ENCODE measurements at regions of chr20 and their contacts with region 1.

Region 1: GRCh38 chr20:2688041-2688591 is 4.5 kb upstream of the EBF4 start:
- DNase-seq: peak; percentile 79
- ATAC-seq: peak; percentile 76
- H3K4me3 Mint-ChIP-seq: peak overlapping the region; percentile 59
- H3K27ac Mint-ChIP-seq: no peak overlapping the region
- H3K4me1 Mint-ChIP-seq: peaks cover 21% of the 10 kb centered on the region
- H3K27me3 Mint-ChIP-seq: peaks cover 87% of the 10 kb centered on the region
- CTCF ChIP-seq: peak; percentile 86

Region 2: GRCh38 chr20:2005831-2006426 is 682.2 kb before region 1 on chr20:
- CTCF ChIA-PET with region 1: no interaction called
- POLR2A ChIA-PET with region 1: no interaction called
- DNase-seq: peak; percentile 90
- ATAC-seq: peak; percentile 50; the same call in 1 of the 2 replicates
- H3K4me3 Mint-ChIP-seq: no peak overlapping the region
- H3K27ac Mint-ChIP-seq: no peak overlapping the region
- H3K4me1 Mint-ChIP-seq: peaks cover 10% of the 10 kb centered on the region; the same call in 1 of the 2 replicates
- H3K27me3 Mint-ChIP-seq: peaks cover 20% of the 10 kb centered on the region
- CTCF ChIP-seq: no peak

Region 3: GRCh38 chr20:2599288-2600006 is 88.7 kb before region 1 on chr20:
- CTCF ChIA-PET with region 1: no interaction called
- POLR2A ChIA-PET with region 1: no interaction called
- DNase-seq: peak; percentile 17
- ATAC-seq: peak; percentile 81
- H3K4me3 Mint-ChIP-seq: no peak overlapping the region
- H3K27ac Mint-ChIP-seq: no peak overlapping the region; the same call in 1 of the 2 replicates
- H3K4me1 Mint-ChIP-seq: peaks cover 10% of the 10 kb centered on the region
- H3K27me3 Mint-ChIP-seq: no peaks in the 10 kb centered on the region; the same call in 1 of the 2 replicates
- CTCF ChIP-seq: no peak

Region 4: GRCh38 chr20:2626853-2627541 is 61.1 kb before region 1 on chr20:
- CTCF ChIA-PET with region 1: no interaction called
- POLR2A ChIA-PET with region 1: no interaction called
- DNase-seq: no peak
- ATAC-seq: no peak
- H3K4me3 Mint-ChIP-seq: no peak overlapping the region
- H3K27ac Mint-ChIP-seq: no peak overlapping the region
- H3K4me1 Mint-ChIP-seq: no peaks in the 10 kb centered on the region
- H3K27me3 Mint-ChIP-seq: peaks cover 34% of the 10 kb centered on the region
- CTCF ChIP-seq: no peak

Region 5: GRCh38 chr20:2671977-2672376 is 16.1 kb before region 1 on chr20:
- CTCF ChIA-PET with region 1: interaction called, 12 read pairs
- POLR2A ChIA-PET with region 1: no interaction called
- DNase-seq: peak; percentile 66
- ATAC-seq: peak; percentile 94
- H3K4me3 Mint-ChIP-seq: no peak overlapping the region
- H3K27ac Mint-ChIP-seq: no peak overlapping the region
- H3K4me1 Mint-ChIP-seq: 0 out of 2 replicates have a peak, but pooled peaks cover 3% of the 10 kb centered on the region
- H3K27me3 Mint-ChIP-seq: peaks cover 32% of the 10 kb centered on the region
- CTCF ChIP-seq: peak; percentile 25; the same call in 1 of the 2 replicates

Region 6: DNA sequence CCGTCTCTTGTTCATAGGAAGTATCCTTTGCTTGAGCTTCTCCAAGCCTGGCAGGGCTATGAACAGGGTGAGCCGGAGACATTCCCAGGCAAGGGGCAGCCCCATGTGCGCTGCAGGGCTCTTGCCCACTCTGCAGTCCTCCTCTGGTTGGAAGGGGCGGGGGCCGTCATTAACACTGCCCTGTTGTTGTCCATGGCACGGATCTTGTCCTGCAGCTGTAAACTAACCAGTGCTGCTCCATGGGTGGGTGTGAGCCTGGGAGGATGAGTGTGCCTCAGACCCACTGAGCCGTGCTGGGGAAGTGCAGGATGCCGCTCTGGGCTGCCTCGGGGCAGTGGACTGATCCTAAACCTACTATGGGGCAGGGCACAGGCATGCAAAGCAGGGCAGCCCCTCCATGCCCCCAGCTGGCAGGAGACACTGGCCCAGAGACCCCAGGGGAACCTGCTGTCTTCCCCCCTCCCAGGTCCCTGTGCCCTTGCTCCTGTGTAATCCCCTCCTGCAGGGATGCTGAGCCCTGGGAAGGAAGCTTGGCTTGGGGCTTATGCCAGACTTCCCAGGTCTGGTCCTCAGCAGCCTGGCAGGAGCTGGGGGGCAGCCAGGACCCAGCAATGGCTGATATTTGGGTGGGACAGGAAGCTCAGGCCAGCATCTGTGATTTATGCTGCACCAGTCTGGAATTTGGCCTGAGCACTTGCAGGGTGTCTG is 13.0 kb after region 1 on chr20:
- CTCF ChIA-PET with region 1: interaction called, 35 read pairs
- POLR2A ChIA-PET with region 1: no interaction called
- DNase-seq: no peak
- ATAC-seq: no peak
- H3K4me3 Mint-ChIP-seq: no peak overlapping the region
- H3K27ac Mint-ChIP-seq: no peak overlapping the region
- H3K4me1 Mint-ChIP-seq: peaks cover 29% of the 10 kb centered on the region
- H3K27me3 Mint-ChIP-seq: peaks cover 95% of the 10 kb centered on the region
- CTCF ChIP-seq: no peak

Region 7: DNA sequence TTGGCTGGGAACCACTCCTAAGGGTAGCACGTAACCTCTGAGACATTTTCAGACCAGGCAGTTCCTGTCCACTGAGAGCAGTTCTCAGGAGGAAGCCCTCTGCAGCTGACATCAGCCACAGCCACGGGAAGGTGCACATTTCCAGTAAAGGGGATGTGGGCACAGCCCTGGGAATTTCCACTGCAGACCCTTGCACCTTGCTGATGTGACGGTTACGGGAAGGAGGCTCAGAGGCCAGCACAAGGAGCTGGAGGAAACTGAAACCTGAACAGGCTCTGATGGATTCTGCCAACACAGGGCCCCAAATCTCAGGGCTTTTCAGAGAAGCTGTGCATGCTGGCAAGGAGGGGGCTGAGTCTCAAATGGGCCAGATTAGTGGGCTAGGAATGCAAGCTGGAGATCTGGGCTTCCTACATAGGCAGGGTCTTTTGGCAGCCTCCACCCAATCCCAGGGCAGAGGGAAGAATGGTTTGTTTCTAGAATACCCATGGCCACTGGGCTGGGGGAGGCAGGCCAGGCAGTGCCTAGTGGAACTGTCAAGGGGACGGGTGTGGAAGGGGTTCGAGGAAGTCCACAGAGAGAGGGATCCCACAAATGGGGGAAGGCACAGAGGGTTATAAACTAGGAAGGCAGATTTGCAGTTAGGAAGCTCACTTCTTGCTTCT is 18.7 kb after region 1 on chr20:
- CTCF ChIA-PET with region 1: interaction called, 35 read pairs
- POLR2A ChIA-PET with region 1: no interaction called
- DNase-seq: no peak
- ATAC-seq: no peak
- H3K4me3 Mint-ChIP-seq: no peak overlapping the region
- H3K27ac Mint-ChIP-seq: no peak overlapping the region
- H3K4me1 Mint-ChIP-seq: peaks cover 30% of the 10 kb centered on the region
- H3K27me3 Mint-ChIP-seq: peaks cover 46% of the 10 kb centered on the region
- CTCF ChIP-seq: no peak

Region 8: DNA sequence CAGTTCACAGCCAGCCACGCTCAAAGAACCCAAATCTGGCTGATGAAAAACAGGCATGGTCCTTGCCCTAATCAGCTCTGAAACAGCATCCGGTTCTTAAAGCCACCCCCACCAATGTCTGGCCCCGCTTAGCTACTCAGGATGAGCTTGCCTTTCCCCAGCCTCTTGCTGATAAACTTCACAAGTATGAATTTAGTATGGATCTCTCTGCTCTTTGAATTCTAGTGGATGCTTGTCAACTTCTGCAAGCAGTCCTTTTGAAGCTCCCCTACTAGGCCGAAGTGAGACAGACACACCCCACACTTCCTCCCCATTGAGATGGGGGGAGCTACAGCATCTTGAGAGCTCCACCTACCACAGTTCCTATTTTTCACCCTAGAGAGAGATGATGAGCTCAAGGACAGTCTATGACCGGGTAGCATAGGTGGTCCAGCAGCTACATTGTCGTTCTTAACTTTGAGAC is 41.2 kb after region 1 on chr20:
- CTCF ChIA-PET with region 1: interaction called, 10 read pairs
- POLR2A ChIA-PET with region 1: no interaction called
- DNase-seq: no peak
- ATAC-seq: peak; percentile 57
- H3K4me3 Mint-ChIP-seq: no peak overlapping the region
- H3K27ac Mint-ChIP-seq: no peak overlapping the region
- H3K4me1 Mint-ChIP-seq: peaks cover 5% of the 10 kb centered on the region
- H3K27me3 Mint-ChIP-seq: peaks cover 46% of the 10 kb centered on the region
- CTCF ChIP-seq: no peak

Region 9: GRCh38 chr20:2742934-2743559 is 54.9 kb after region 1 on chr20:
- CTCF ChIA-PET with region 1: interaction called, 23 read pairs
- POLR2A ChIA-PET with region 1: interaction called, 4 read pairs
- DNase-seq: peak; percentile 82
- ATAC-seq: peak; percentile 91
- H3K4me3 Mint-ChIP-seq: no peak overlapping the region
- H3K27ac Mint-ChIP-seq: no peak overlapping the region
- H3K4me1 Mint-ChIP-seq: peaks cover 26% of the 10 kb centered on the region
- H3K27me3 Mint-ChIP-seq: peaks cover 73% of the 10 kb centered on the region
- CTCF ChIP-seq: peak; percentile 75

Region 10: GRCh38 chr20:2771631-2772080 is 83.5 kb after region 1 on chr20:
- CTCF ChIA-PET with region 1: no interaction called
- POLR2A ChIA-PET with region 1: no interaction called
- DNase-seq: no peak
- ATAC-seq: peak; percentile 65
- H3K4me3 Mint-ChIP-seq: no peak overlapping the region
- H3K27ac Mint-ChIP-seq: no peak overlapping the region
- H3K4me1 Mint-ChIP-seq: no peaks in the 10 kb centered on the region
- H3K27me3 Mint-ChIP-seq: peaks cover 14% of the 10 kb centered on the region; the same call in 1 of the 2 replicates
- CTCF ChIP-seq: no peak

Region 11: DNA sequence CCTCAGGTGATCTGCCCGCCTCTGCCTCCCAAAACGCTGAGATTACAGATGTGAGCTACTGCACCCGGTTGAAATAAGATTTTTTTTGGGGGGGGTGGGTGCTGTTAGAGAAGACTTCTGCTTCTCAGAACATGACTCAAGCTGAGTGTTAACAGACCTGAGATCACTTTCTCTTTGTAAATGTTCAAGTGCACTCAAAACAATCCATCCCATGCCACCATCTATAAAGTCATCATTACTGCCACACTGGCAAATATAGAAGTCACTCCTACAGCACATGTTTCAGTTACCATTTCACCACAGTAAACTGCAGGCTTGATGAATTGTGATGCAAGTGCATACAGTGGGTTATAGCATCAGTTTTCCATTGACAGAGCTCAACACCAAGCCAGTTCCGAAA is 161.4 kb after region 1 on chr20:
- CTCF ChIA-PET with region 1: interaction called, 30 read pairs
- POLR2A ChIA-PET with region 1: no interaction called
- DNase-seq: no peak
- ATAC-seq: no peak
- H3K4me3 Mint-ChIP-seq: no peak overlapping the region
- H3K27ac Mint-ChIP-seq: no peak overlapping the region
- H3K4me1 Mint-ChIP-seq: peaks cover 4% of the 10 kb centered on the region
- H3K27me3 Mint-ChIP-seq: no peaks in the 10 kb centered on the region
- CTCF ChIP-seq: no peak